Panc1 (cell line): ENCODE measurements at regions of chr19 and their contacts with region 1.

Region 1: DNA sequence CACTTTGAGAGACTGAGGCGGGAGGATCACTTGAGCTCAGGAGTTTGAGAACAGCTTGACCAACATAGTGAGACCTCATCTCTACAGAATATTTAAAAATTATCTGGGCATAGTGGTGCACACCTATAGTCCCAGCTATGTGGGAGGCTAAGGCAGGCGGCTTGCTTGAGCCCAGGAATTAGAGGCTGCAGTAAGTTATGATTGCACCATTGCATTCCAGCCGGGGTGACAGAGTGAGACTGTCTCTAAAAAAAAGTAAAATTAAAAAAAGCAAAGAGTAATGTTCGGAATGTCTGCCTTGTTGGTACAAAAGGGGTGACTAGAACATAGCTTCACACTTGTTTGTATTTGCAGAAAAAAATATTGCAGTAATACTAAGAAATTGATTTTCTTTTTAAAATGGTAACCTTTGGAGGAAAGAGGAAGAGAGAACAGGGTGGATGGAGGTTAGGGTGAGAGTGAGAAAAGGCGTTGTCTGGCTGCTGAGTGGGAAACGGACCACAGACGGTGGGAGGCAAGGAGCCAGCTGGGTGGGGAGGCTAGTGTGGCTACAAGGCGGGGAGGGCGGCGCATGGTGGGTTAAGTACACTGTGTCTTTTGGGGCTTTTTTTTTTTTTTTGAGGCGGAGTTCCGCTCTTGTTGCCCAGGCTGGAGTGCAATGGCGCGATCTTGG is 10.2 kb downstream of the PPP1R14A start:
- DNase-seq: no peak
- ATAC-seq: no peak
- H3K4me3 ChIP-seq: no peak overlapping the region
- H3K27ac ChIP-seq: peak overlapping the region; percentile 26
- H3K4me1 ChIP-seq: peaks cover 30% of the 10 kb centered on the region
- H3K27me3 ChIP-seq: no peaks in the 10 kb centered on the region
- CTCF ChIP-seq: no peak

Region 2: GRCh38 chr19:38303517-38304349 is 57.8 kb after region 1 on chr19 and contains the start of gene C19orf33:
- CTCF ChIA-PET with region 1: interaction called, 6 read pairs
- POLR2A ChIA-PET with region 1: interaction called, 10 read pairs
- in situ Hi-C with region 1: no loop called
- intact Hi-C with region 1: no loop called
- DNase-seq: peak; percentile 86
- ATAC-seq: peak; percentile 57
- H3K4me3 ChIP-seq: peak within 1 kb of the TSS; percentile 71 to 88
- H3K27ac ChIP-seq: peak within 1 kb of the TSS; percentile 90
- H3K4me1 ChIP-seq: peaks cover 61% of the 10 kb centered on the region
- H3K27me3 ChIP-seq: no peaks in the 10 kb centered on the region
- CTCF ChIP-seq: no peak
- total RNA-seq, gene C19orf33: 201 TPM

Region 3: GRCh38 chr19:38335949-38336637 is 90.1 kb after region 1 on chr19:
- CTCF ChIA-PET with region 1: interaction called, 6 read pairs
- POLR2A ChIA-PET with region 1: no interaction called
- in situ Hi-C with region 1: no loop called
- intact Hi-C with region 1: loop called (anchors 2 kb)
- DNase-seq: peak; percentile 83
- ATAC-seq: peak; percentile 89
- H3K4me3 ChIP-seq: peak overlapping the region; percentile 72 to 96
- H3K27ac ChIP-seq: peak overlapping the region; percentile 80
- H3K4me1 ChIP-seq: peaks cover 4% of the 10 kb centered on the region; the same call in 1 of the 2 replicates
- H3K27me3 ChIP-seq: no peaks in the 10 kb centered on the region
- CTCF ChIP-seq: no peak

Region 4: DNA sequence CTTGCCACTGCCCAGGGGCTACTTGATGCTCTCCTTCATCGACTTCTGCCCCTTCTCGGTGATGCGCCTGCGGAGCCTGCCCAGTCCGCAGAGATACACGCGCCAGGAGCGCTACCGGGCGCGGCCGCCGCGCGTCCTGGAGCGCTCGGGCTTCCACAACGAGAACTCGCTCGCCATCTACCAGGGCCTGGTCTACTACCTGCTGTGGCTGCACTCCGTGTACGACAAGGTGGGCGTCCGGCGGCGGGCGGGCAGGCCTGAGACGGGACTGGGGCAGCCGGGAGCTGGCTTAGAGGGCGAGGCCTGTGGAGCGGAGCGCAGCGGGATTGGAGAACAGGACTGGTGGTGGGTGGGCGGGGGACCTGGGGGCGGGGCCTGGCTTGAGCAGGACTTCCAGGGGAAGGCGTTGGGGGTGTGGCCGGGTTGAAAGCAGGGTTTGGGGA is 115.7 kb after region 1 on chr19:
- CTCF ChIA-PET with region 1: no interaction called
- POLR2A ChIA-PET with region 1: interaction called, 11 read pairs
- in situ Hi-C with region 1: no loop called
- intact Hi-C with region 1: no loop called
- DNase-seq: peak; percentile 28
- ATAC-seq: peak; percentile 93
- H3K4me3 ChIP-seq: peak overlapping the region; percentile 67 to 80
- H3K27ac ChIP-seq: peak overlapping the region; percentile 29; the same call in 1 of the 2 replicates
- H3K4me1 ChIP-seq: 0 out of 2 replicates have a peak, but pooled peaks cover 3% of the 10 kb centered on the region
- H3K27me3 ChIP-seq: peaks cover 10% of the 10 kb centered on the region
- CTCF ChIP-seq: no peak

Region 5: GRCh38 chr19:38769635-38770211 is 523.8 kb after region 1 on chr19:
- CTCF ChIA-PET with region 1: no interaction called
- POLR2A ChIA-PET with region 1: no interaction called
- in situ Hi-C with region 1: no loop called
- intact Hi-C with region 1: no loop called
- DNase-seq: no peak
- ATAC-seq: peak; percentile 62
- H3K4me3 ChIP-seq: no peak overlapping the region
- H3K27ac ChIP-seq: peak overlapping the region; percentile 48; the same call in 1 of the 2 replicates
- H3K4me1 ChIP-seq: peaks cover 4% of the 10 kb centered on the region; the same call in 1 of the 2 replicates
- H3K27me3 ChIP-seq: no peaks in the 10 kb centered on the region
- CTCF ChIP-seq: no peak; the same call in 1 of the 2 replicates